B cell (primary cell): ENCODE measurements at regions of chr1 and their contacts with region 1.

Region 1: GRCh38 chr1:245045087-245045881 is 109.5 kb upstream of the KIF26B start:
- DNase-seq: no peak
- ATAC-seq: no peak
- H3K4me3 ChIP-seq: no peak overlapping the region
- H3K4me3 Mint-ChIP-seq: no peak overlapping the region
- H3K27ac ChIP-seq: no peak overlapping the region
- H3K27ac Mint-ChIP-seq: no peak overlapping the region
- H3K4me1 ChIP-seq: no peaks in the 10 kb centered on the region
- H3K4me1 Mint-ChIP-seq: no peaks in the 10 kb centered on the region
- H3K27me3 ChIP-seq: no peaks in the 10 kb centered on the region
- H3K27me3 Mint-ChIP-seq: no peaks in the 10 kb centered on the region
- CTCF ChIP-seq: no peak

Region 2: DNA sequence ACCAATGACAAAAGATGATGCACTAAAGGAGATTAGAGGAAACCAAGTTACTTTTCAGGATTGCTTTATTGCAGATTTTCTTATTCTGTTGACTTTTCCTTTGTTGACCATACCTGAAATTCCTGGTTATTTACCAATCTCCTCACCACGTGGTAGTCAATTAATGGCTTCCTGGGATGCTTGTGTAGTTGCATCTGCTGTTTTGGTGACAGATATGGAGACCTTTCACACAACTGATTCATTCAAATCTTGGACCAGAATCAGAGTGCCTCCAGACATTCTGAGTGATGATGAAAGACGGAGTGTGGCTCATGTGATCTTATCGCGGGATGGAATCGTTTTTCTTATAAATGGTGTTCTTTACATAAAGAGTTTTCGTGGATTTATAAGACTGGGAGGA is 492.9 kb before region 1 on chr1:
- CTCF ChIA-PET with region 1: no interaction called
- POLR2A ChIA-PET with region 1: no interaction called
- intact Hi-C with region 1: no loop called
- DNase-seq: no peak
- ATAC-seq: no peak
- H3K4me3 ChIP-seq: no peak overlapping the region
- H3K4me3 Mint-ChIP-seq: no peak overlapping the region
- H3K27ac ChIP-seq: no peak overlapping the region
- H3K27ac Mint-ChIP-seq: no peak overlapping the region
- H3K4me1 ChIP-seq: no peaks in the 10 kb centered on the region
- H3K4me1 Mint-ChIP-seq: no peaks in the 10 kb centered on the region
- H3K27me3 ChIP-seq: no peaks in the 10 kb centered on the region
- H3K27me3 Mint-ChIP-seq: no peaks in the 10 kb centered on the region
- CTCF ChIP-seq: no peak

Region 3: DNA sequence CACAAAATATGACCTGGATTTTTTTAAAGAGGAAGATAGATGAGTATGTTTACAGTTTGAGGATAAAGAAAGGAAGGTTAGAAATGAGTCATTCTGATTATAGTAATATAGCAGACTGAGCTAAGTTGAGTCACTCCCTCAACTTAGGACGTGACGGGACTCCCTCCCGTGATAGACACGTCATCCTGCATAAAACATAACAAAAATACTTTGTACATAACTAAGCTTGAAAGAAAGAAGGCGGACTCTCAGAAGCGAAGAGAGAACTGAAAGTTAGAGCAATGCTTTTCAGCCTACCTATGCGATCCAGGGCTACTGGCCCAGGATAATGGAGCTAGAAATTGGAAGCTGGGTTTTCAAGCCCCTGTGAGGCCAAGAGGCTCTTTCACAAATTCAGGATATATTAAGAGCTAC is 445.3 kb before region 1 on chr1:
- CTCF ChIA-PET with region 1: interaction called, 75 read pairs
- POLR2A ChIA-PET with region 1: no interaction called
- intact Hi-C with region 1: loop called (anchors 1 kb)
- DNase-seq: peak; percentile 29
- ATAC-seq: peak; percentile 89
- H3K4me3 ChIP-seq: no peak overlapping the region
- H3K4me3 Mint-ChIP-seq: peak overlapping the region; percentile 1
- H3K27ac ChIP-seq: no peak overlapping the region
- H3K27ac Mint-ChIP-seq: peak overlapping the region; percentile 76
- H3K4me1 ChIP-seq: no peaks in the 10 kb centered on the region
- H3K4me1 Mint-ChIP-seq: peaks cover 9% of the 10 kb centered on the region
- H3K27me3 ChIP-seq: no peaks in the 10 kb centered on the region
- H3K27me3 Mint-ChIP-seq: no peaks in the 10 kb centered on the region
- CTCF ChIP-seq: no peak

Region 4: DNA sequence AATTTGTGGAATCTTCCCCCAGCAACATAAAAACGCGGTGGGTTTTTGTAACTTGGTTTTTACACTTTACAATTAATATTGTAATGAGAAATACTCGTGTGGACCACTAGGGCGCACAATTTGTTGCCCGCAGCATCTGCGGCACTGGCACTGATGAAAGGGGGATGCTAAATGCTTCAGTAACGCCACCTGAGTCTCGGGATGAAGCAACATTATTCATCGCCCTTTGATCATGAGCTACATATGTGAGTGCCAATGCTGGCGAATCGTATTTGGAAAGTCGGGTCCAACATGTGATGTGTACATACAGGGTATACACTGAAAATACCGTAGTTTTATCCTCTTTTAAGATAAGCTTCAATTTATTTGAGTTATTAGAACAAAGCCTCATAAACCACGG is 244.0 kb before region 1 on chr1:
- CTCF ChIA-PET with region 1: interaction called, 265 read pairs
- POLR2A ChIA-PET with region 1: interaction called, 3 read pairs
- intact Hi-C with region 1: loop called (anchors 1 kb)
- DNase-seq: peak; percentile 80
- ATAC-seq: peak; percentile 94
- H3K4me3 ChIP-seq: no peak overlapping the region
- H3K4me3 Mint-ChIP-seq: peak overlapping the region; percentile 68
- H3K27ac ChIP-seq: no peak overlapping the region
- H3K27ac Mint-ChIP-seq: peak overlapping the region; percentile 38
- H3K4me1 ChIP-seq: peaks cover 6 to 8% of the 10 kb centered on the region in 2 donors
- H3K4me1 Mint-ChIP-seq: peaks cover 2% of the 10 kb centered on the region
- H3K27me3 ChIP-seq: no peaks in the 10 kb centered on the region
- H3K27me3 Mint-ChIP-seq: peaks cover 10% of the 10 kb centered on the region
- CTCF ChIP-seq: peak; percentile 81

Region 5: DNA sequence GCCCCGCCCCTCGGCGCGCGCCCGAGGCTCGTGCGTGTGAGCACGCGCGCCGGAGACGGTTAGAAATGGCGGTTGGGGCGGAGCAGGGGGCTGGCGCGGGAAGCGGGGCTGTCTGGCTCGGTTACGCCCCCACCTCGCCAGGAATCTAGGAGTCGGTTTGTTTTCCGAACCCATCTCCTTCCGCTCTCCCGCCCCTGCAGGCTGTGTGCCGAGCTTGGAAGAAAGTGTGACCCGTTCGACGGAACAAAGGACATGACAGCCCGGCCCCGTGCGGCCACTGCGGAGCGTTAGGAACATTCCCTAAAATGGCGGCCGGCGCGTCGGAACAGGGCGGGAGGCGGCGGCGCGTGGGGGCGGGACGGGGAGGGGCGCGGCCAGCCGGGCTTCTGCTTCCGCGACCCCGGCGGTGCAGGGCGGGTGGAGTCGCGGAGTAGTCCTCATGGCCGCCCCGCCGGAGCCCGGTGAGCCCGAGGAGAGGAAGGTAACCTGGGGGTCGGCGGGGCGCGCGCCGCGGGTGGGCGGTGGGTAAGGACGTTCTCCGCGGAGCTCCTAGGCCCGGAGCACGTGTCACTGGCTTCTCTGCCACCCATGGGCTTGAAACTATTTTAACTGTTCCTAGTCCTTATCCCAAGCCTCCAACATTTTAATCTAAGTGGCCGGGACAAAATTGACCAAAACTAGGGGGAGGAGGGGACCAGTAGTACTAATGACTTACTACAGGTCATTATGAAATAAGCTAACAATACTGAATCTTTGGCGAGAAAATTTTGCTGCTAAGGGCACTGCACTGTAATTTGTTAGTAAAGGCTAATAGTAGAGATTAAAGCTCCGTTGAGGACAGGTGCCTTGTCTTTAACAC is 209.8 kb before region 1 on chr1 and contains the start of gene COX20:
- CTCF ChIA-PET with region 1: interaction called, 38 read pairs
- POLR2A ChIA-PET with region 1: interaction called, 3 read pairs
- intact Hi-C with region 1: no loop called
- DNase-seq: peak; percentile 97
- ATAC-seq: peak; percentile 69
- H3K4me3 ChIP-seq: peak within 1 kb of the TSS; percentile 89 to 98 (median 94)
- H3K4me3 Mint-ChIP-seq: peak within 1 kb of the TSS; percentile 100
- H3K27ac ChIP-seq: peak within 1 kb of the TSS; percentile 97
- H3K27ac Mint-ChIP-seq: peak within 1 kb of the TSS; percentile 100
- H3K4me1 ChIP-seq: peaks cover 21 to 27% of the 10 kb centered on the region in 2 donors
- H3K4me1 Mint-ChIP-seq: peaks cover 59% of the 10 kb centered on the region
- H3K27me3 ChIP-seq: no peaks in the 10 kb centered on the region
- H3K27me3 Mint-ChIP-seq: no peaks in the 10 kb centered on the region
- CTCF ChIP-seq: peak; percentile 13
- total RNA-seq, gene COX20: 35.7 and 37.7 TPM in 2 replicates

Region 6: DNA sequence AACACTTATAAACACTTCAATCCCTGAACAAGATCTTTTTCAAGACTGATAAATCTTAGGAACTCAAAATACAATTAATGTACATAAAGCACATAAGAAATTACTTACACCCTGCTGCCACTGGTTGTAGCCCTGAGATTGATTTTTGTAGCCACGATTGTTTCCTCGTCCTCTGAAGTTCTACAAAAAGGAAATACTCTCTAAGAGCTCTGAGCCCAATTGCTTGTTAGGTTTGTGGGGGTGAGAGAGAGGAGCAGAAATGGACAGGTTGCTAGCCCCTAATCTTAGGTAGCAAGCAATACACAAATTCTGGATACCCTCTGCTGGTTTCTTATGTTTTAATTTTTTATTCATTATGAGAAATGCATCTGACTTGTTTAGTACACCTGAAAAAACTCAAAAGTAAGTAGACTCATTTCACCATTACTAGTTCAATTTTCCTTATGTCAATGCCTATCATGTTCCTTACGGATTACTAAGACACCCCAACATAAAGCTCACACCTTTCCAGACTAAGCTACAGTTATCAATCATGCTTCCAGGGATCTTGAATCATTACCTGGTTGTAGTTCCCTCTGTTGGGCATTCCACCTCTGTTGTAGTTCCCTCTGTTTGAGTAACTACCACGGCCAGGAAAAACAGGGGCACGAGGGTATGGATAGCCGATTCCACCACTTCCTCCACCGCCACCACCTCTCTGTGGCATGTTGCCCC is 190.3 kb before region 1 on chr1:
- CTCF ChIA-PET with region 1: interaction called, 27 read pairs
- POLR2A ChIA-PET with region 1: no interaction called
- intact Hi-C with region 1: no loop called
- DNase-seq: no peak
- ATAC-seq: no peak
- H3K4me3 ChIP-seq: no peak overlapping the region
- H3K4me3 Mint-ChIP-seq: peak overlapping the region; percentile 5
- H3K27ac ChIP-seq: peak overlapping the region in 1 of 2 donors; percentile 52
- H3K27ac Mint-ChIP-seq: peak overlapping the region; percentile 64
- H3K4me1 ChIP-seq: peaks cover 22 to 34% of the 10 kb centered on the region in 2 donors
- H3K4me1 Mint-ChIP-seq: peaks cover 50% of the 10 kb centered on the region
- H3K27me3 ChIP-seq: no peaks in the 10 kb centered on the region
- H3K27me3 Mint-ChIP-seq: no peaks in the 10 kb centered on the region
- CTCF ChIP-seq: no peak

Region 7: GRCh38 chr1:245031041-245031440 is 14.2 kb before region 1 on chr1:
- CTCF ChIA-PET with region 1: interaction called, 23 read pairs
- POLR2A ChIA-PET with region 1: no interaction called
- intact Hi-C with region 1: no loop called
- DNase-seq: no peak
- ATAC-seq: no peak
- H3K4me3 ChIP-seq: no peak overlapping the region
- H3K4me3 Mint-ChIP-seq: no peak overlapping the region
- H3K27ac ChIP-seq: no peak overlapping the region
- H3K27ac Mint-ChIP-seq: no peak overlapping the region
- H3K4me1 ChIP-seq: no peaks in the 10 kb centered on the region
- H3K4me1 Mint-ChIP-seq: no peaks in the 10 kb centered on the region
- H3K27me3 ChIP-seq: no peaks in the 10 kb centered on the region
- H3K27me3 Mint-ChIP-seq: no peaks in the 10 kb centered on the region
- CTCF ChIP-seq: no peak